ENCODE measurements at regions of chr12 and their contacts with region 1.

Region 1: DNA sequence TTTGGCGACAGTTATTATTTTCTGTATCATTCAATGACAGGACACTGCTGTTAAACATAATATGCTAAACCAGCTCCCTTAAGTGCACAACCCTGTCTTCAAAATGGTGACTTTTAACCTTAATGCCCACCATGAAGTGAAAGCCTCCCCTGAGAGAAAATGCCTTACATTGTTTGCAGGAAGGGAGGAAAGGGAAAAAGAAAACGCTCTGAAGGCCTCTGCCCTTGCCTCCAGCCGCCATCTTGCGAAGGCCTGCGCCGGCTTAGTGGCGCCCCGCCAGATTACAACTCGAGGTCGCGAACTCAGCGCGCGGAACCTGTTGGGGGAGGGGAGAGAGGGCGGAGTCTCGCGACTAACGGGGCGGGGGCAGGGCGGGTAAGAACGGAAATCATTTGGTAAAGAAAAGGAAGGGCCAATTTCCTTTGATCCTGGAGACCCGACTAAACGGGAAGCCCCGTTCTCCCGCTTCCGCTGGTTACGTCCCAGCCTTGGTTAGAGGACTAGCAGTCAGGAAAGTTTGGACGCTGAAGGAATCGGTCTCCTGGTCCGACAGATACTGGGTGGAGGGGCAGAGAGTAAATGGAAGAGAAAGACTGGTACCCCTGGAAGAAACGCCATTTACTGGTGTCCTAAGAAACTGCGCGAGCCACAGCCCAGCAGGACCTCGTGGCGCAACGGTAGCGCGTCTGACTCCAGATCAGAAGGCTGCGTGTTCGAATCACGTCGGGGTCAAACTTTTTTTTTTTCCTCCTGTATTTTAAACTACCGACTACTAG is 11.6 kb upstream of the TMPO start:
- DNase-seq: peak; percentile 89
- ATAC-seq: peak; percentile 64
- H3K4me3 ChIP-seq: peak overlapping the region; percentile 83
- H3K27ac ChIP-seq: peak overlapping the region; percentile 88
- H3K4me1 ChIP-seq: peaks cover 13% of the 10 kb centered on the region
- H3K27me3 ChIP-seq: no peaks in the 10 kb centered on the region
- CTCF ChIP-seq: no peak

Region 2: DNA sequence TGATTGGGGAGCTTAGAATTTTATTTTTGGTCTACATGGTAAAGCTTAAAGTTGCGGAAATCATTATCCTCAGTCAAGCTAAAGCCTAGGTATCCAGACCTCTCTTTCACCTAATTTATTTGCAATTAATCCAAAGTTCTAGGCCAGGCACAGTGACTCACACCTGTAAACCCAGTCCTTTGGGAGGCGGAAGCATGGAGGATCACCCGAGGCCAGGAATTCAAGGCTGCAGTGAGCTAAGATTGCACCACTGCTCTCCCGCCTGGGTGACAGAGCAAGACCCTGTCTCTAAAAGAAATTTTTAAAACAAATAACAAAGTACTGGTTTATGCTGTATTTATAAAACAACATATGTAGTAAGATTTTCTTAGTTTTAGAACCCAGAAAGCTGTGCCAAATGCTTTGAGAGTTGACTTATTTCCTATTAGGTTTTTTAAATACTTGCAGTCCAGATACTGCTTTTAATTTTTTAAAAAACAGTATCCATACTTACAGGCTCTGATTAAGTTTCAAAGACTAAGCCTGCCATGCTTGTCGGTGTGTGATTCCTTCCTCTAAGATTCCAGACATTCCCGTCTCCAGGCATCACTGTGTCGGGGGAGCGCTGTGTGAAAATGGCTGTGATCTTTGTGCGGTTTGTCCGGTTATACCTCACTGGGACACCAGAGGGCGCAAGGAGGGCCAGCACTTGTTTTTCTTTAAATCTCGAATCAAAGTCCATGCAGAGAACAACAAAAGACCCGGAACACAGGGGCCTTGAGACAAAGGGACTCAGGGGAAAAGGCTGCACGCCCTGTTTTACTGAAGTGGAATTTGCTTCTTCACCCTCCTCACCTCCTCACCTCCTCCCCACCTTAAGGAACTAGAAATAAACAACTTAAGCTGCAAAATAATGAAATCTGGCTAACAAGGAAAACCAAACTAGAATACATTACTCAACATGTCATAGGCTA is 13.0 kb before region 1 on chr12:
- CTCF ChIA-PET with region 1: interaction called, 3 read pairs
- POLR2A ChIA-PET with region 1: interaction called, 4 read pairs
- intact Hi-C with region 1: loop called (anchors 1 kb)
- DNase-seq: peak; percentile 90
- ATAC-seq: peak; percentile 90
- H3K4me3 ChIP-seq: peak overlapping the region; percentile 50
- H3K27ac ChIP-seq: peak overlapping the region; percentile 33
- H3K4me1 ChIP-seq: peaks cover 16% of the 10 kb centered on the region
- H3K27me3 ChIP-seq: no peaks in the 10 kb centered on the region
- CTCF ChIP-seq: peak; percentile 87

Region 3: DNA sequence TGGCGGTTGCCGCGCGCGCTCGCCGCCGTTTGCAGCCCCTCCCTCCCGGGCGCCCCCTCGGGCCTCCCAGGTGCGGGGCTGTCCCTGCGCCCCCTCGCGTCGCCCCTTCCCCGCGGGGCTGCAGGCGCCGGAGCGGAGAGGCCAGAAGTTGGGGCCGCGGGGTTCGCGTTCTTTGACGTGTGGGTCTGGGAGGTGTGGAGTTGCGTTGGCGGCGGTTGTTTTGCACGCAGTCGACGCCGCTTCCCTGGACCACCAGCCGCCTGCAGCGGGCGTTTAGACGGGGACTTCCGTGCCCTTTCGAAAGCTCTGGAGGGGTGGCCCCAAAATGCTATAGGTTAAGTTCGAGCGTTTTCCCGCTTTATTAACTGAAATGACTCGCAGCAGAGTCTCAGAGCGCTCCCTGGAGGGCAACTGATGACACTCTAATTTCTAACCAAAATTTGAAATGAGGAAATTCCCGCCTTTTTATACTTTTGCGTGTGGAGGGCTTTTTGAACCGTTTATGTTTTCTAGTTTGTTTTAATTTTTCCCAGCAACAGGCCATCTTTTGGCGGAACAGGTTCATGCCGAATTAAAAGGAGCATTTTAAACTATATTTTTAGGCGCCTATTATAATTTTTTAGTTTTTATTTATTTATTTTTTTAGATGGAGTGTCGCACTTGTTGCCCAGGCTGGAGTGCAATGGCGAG is 12.5 kb after region 1 on chr12:
- CTCF ChIA-PET with region 1: no interaction called
- POLR2A ChIA-PET with region 1: no interaction called
- intact Hi-C with region 1: loop called (anchors 1 kb)
- DNase-seq: peak; percentile 89
- ATAC-seq: peak; percentile 45
- H3K4me3 ChIP-seq: peak overlapping the region; percentile 98
- H3K27ac ChIP-seq: peak overlapping the region; percentile 89
- H3K4me1 ChIP-seq: peaks cover 31% of the 10 kb centered on the region
- H3K27me3 ChIP-seq: no peaks in the 10 kb centered on the region
- CTCF ChIP-seq: peak; percentile 83

Region 4: GRCh38 chr12:98572010-98572409 is 68.2 kb after region 1 on chr12:
- CTCF ChIA-PET with region 1: no interaction called
- POLR2A ChIA-PET with region 1: no interaction called
- intact Hi-C with region 1: no loop called
- DNase-seq: no peak
- ATAC-seq: no peak
- H3K4me3 ChIP-seq: no peak overlapping the region
- H3K27ac ChIP-seq: no peak overlapping the region
- H3K4me1 ChIP-seq: peaks cover 6% of the 10 kb centered on the region
- H3K27me3 ChIP-seq: no peaks in the 10 kb centered on the region
- CTCF ChIP-seq: peak; percentile 57

Region 5: GRCh38 chr12:98644711-98645402 is 141.1 kb after region 1 on chr12 and contains the starts of genes APAF1 and IKBIP:
- CTCF ChIA-PET with region 1: no interaction called
- POLR2A ChIA-PET with region 1: no interaction called
- intact Hi-C with region 1: loop called (anchors 2 kb)
- DNase-seq: peak; percentile 97
- ATAC-seq: peak; percentile 86
- H3K4me3 ChIP-seq: peak within 1 kb of the TSS; percentile 88
- H3K27ac ChIP-seq: peak within 1 kb of the TSS; percentile 51
- H3K4me1 ChIP-seq: peaks cover 6% of the 10 kb centered on the region
- H3K27me3 ChIP-seq: no peaks in the 10 kb centered on the region
- CTCF ChIP-seq: no peak
- total RNA-seq, gene APAF1: 8.5 and 10.1 TPM in 2 replicates
- total RNA-seq, gene IKBIP: 11.1 and 14.6 TPM in 2 replicates